ENCODE measurements at regions of chr18 and their contacts with region 1.

Region 1: DNA sequence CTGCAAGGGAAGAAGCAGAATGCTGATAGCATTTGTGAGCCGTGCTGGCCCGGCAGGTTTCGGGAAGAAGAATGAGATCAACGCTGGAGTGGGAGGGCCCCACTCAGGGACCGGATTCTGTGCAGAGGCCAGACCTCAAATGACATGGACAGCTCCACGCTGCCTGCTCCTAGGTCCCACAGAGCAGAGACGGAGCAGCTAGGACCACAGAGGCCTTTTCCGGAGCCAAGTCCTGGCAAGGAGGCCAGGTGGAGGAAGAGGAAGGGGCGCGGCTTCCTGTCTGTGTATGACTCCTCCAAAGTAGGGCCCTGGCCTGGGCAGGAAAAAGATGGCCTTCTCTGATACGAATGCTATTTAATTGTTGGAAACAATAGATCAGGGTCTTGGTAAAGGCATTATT is 139.9 kb downstream of the LRRC30 start:
- DNase-seq: no peak
- H3K4me3 ChIP-seq: no peak overlapping the region
- H3K27ac ChIP-seq: no peak overlapping the region
- H3K4me1 ChIP-seq: no peaks in the 10 kb centered on the region
- H3K27me3 ChIP-seq: peaks cover 54% of the 10 kb centered on the region
- CTCF ChIP-seq: no peak

Region 2: DNA sequence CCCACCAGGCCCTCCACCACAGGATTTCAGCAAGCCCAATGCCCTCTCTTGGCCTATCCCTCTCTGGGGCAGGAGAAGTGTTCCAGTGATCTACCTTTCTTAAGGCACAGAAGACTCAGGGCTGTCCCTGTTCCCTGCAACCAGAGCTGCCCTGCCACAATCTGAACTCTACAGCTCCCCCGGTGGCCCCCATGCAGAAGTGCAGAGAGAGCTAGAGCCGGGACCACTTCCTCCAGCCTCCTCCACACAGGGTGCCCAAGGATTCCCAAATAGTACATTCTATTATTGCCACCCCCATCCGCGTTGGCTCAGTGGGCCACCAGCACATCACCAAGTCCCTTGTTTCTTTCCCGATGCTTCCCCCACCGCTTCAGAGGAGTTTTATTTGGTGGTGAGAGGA is 81.5 kb after region 1 on chr18:
- CTCF ChIA-PET with region 1: no interaction called
- POLR2A ChIA-PET with region 1: no interaction called
- intact Hi-C with region 1: loop called (anchors 10 kb)
- DNase-seq: peak in 1 of 2 experiments; percentile 24
- H3K4me3 ChIP-seq: no peak overlapping the region
- H3K27ac ChIP-seq: no peak overlapping the region
- H3K4me1 ChIP-seq: no peaks in the 10 kb centered on the region
- H3K27me3 ChIP-seq: peaks cover 97% of the 10 kb centered on the region
- CTCF ChIP-seq: peak; percentile 73

Measured in PC-9 (cell line).